ENCODE measurements at regions of chr16 and their contacts with region 1.

Region 1: GRCh38 chr16:53091466-53092211 is 36.8 kb downstream of the CHD9 start:
- DNase-seq: peak; percentile 68
- H3K4me3 Mint-ChIP-seq: peak overlapping the region; percentile 67
- H3K27ac Mint-ChIP-seq: peak overlapping the region; percentile 50
- H3K4me1 Mint-ChIP-seq: peaks cover 47% of the 10 kb centered on the region
- H3K27me3 Mint-ChIP-seq: no peaks in the 10 kb centered on the region
- CTCF ChIP-seq: no peak

Region 2: GRCh38 chr16:52852993-52853392 is 238.6 kb before region 1 on chr16:
- CTCF ChIA-PET with region 1: no interaction called
- POLR2A ChIA-PET with region 1: no interaction called
- intact Hi-C with region 1: no loop called
- DNase-seq: no peak
- H3K4me3 Mint-ChIP-seq: no peak overlapping the region
- H3K27ac Mint-ChIP-seq: no peak overlapping the region
- H3K4me1 Mint-ChIP-seq: no peaks in the 10 kb centered on the region
- H3K27me3 Mint-ChIP-seq: peaks cover 22% of the 10 kb centered on the region
- CTCF ChIP-seq: no peak

Region 3: GRCh38 chr16:52964290-52964689 is 127.3 kb before region 1 on chr16:
- CTCF ChIA-PET with region 1: no interaction called
- POLR2A ChIA-PET with region 1: no interaction called
- intact Hi-C with region 1: no loop called
- DNase-seq: no peak
- H3K4me3 Mint-ChIP-seq: no peak overlapping the region
- H3K27ac Mint-ChIP-seq: no peak overlapping the region
- H3K4me1 Mint-ChIP-seq: peaks cover 7% of the 10 kb centered on the region
- H3K27me3 Mint-ChIP-seq: no peaks in the 10 kb centered on the region
- CTCF ChIP-seq: no peak

Region 4: DNA sequence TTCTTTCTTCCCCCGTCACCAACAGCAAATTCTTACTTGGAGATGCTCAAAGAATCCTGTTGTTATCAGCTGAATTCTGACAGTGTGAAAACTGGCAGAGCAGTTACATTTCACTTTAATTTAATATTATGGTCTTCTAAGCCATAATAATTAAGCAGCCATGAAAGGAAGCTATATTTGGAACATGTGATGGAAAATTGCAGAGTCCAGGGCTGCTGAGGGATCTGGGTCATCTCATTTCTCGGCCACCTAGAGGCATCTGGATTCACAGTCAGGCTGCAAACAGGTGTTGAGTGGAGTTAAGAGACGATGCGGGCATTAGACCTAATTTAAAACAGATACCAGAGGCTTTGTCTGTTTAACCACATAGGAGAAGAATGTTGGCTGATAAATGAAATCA is 77.4 kb before region 1 on chr16:
- CTCF ChIA-PET with region 1: no interaction called
- POLR2A ChIA-PET with region 1: no interaction called
- intact Hi-C with region 1: no loop called
- DNase-seq: no peak
- H3K4me3 Mint-ChIP-seq: no peak overlapping the region
- H3K27ac Mint-ChIP-seq: no peak overlapping the region
- H3K4me1 Mint-ChIP-seq: no peaks in the 10 kb centered on the region
- H3K27me3 Mint-ChIP-seq: peaks cover 18% of the 10 kb centered on the region
- CTCF ChIP-seq: no peak

Region 5: DNA sequence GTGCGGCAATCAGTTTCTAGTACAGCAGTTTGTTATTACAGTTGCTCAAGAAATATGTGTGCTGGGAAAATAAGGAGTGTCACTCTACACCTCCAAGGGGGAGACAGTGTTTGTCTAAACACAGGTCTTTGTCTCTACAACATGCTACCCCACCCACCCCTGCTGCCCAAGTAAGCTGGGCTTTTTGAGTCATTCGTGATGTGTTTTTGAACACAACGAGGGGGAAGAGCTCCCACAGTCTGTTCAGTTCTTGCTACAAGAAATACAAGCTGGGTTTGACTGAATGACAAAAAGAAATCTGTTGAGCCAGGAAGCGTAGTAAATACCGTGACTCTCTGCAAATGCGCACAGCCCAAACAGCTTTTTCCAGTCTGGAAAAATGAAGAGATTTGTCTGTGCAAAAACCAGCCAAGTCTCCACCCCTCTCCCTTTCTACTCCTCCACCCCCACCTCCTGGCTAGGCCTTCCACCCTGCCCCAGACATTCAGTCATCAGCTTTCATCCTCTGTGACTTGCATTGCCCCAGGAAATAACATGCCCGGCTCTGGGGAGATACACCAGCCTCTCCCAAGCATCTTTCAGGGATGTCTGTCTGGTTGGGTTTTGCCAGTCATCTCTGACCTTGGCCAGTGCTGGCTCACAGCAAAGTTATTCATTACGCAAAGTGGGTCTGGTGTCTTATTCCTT is 11.2 kb before region 1 on chr16:
- CTCF ChIA-PET with region 1: interaction called, 22 read pairs
- POLR2A ChIA-PET with region 1: interaction called, 22 read pairs
- intact Hi-C with region 1: no loop called
- DNase-seq: peak; percentile 87
- H3K4me3 Mint-ChIP-seq: peak overlapping the region; percentile 64
- H3K27ac Mint-ChIP-seq: peak overlapping the region; percentile 84
- H3K4me1 Mint-ChIP-seq: peaks cover 63% of the 10 kb centered on the region
- H3K27me3 Mint-ChIP-seq: no peaks in the 10 kb centered on the region
- CTCF ChIP-seq: no peak

Region 6: GRCh38 chr16:53323924-53324323 is 232.3 kb after region 1 on chr16:
- CTCF ChIA-PET with region 1: no interaction called
- POLR2A ChIA-PET with region 1: no interaction called
- intact Hi-C with region 1: no loop called
- DNase-seq: no peak
- H3K4me3 Mint-ChIP-seq: no peak overlapping the region
- H3K27ac Mint-ChIP-seq: no peak overlapping the region
- H3K4me1 Mint-ChIP-seq: no peaks in the 10 kb centered on the region
- H3K27me3 Mint-ChIP-seq: no peaks in the 10 kb centered on the region
- CTCF ChIP-seq: no peak

Measured in MCF 10A (cell line).